ENCODE measurements at regions of chr15 and their contacts with region 1.

Region 1: GRCh38 chr15:38414357-38414756 is 39.6 kb upstream of the FAM98B start:
- DNase-seq: peak; percentile 65
- ATAC-seq: peak; percentile 94

Region 2: DNA sequence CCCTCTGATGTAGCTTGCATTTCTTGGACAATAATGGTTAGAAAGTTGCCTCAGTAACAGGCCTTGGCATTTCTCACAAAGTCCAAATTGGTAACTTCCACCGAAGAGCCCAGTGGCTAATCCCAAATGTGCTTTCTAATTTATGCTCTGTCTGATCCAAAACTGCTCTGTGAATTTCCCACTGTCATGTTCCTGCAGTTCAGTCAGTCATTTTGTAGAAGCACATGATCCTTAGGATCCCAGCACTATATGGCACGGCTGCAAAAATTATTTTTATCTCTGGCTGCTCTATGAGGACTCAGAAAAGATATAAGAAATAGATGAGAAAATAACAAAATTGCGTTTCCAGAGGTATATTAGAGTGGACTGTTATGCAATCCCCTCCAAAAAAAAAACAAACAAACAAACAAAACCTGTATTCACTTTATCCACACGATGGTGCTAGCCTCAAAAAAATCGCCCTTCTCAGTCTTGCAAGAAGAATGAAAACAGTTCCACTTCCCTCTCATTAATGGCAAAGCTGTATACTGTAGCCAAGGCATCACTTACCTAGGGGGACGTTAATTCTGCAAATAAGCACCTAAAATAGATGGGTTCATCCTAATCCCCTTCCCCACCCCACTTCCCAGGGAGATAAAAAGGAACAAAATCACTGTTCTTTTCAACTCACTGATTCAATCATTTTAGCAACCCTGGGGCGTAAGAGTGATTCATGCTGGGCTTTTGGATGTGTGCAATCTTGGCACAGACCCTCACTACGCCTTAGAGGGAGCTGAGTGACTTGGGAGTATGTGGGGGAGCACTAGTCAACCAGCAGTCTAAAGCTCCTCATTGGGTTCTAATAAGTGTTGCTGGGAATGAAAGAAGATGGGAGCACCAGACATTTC is 418.7 kb before region 1 on chr15:
- intact Hi-C with region 1: loop called (anchors 10 kb)
- DNase-seq: no peak
- ATAC-seq: peak; percentile 88

Measured in Right ventricle myocardium superior (tissue), 1 donor.